ENCODE measurements at regions of chr17 and their contacts with region 1.

Region 1: GRCh38 chr17:68777243-68777855 is 176.2 kb upstream of the FAM20A start:
- DNase-seq: peak; percentile 58
- ATAC-seq: peak; percentile 77

Region 2: GRCh38 chr17:68657166-68657565 is 120.2 kb before region 1 on chr17:
- intact Hi-C with region 1: no loop called
- DNase-seq: no peak
- ATAC-seq: peak; percentile 55

Region 3: DNA sequence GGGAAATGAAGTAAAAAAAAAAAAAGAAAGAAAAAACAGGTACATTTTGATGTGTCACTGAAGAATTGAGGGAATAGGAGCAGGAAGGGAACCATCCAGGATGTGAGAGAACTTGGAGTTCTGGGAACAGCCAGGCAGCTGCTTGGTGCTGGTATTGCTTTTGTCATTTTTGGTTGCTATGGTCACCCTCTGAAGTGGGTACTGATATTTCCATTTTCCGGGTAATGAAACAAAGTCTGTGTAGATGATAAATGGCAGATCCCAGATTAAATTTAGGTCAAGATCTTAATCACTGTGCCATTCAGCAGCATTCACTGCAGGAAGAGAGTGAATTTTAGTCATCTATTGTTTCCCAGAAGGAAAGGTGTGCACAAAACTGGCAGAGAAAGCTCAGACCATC is 84.3 kb after region 1 on chr17:
- intact Hi-C with region 1: no loop called
- DNase-seq: no peak
- ATAC-seq: peak; percentile 76

Region 4: DNA sequence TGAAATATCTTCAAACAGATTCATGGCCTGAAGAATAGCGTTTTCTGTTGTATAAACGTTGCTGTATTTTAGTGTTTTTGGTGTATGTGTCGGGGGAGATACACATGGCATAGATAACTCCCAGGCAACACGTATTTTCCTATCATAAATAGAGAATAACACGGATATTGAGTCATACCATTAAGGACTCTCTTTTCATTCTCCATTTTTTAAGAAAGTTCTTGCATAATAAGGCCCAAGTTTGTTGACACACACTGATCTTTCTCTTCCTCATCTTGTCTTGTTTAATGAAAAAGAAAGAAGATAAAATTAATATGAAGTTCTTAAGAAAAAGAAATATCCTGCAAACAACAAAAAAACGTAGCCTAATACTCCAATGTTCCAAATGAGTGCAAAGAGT is 164.4 kb after region 1 on chr17:
- intact Hi-C with region 1: no loop called
- DNase-seq: no peak
- ATAC-seq: no peak

Region 5: GRCh38 chr17:68972119-68972704 is 194.9 kb after region 1 on chr17:
- intact Hi-C with region 1: loop called (anchors 5 kb)
- DNase-seq: no peak
- ATAC-seq: peak; percentile 61

Measured in Right ventricle myocardium superior (tissue), 1 donor.